Kidney (tissue), 22 donors: ENCODE measurements at regions of chr20 and their contacts with region 1.

Region 1: DNA sequence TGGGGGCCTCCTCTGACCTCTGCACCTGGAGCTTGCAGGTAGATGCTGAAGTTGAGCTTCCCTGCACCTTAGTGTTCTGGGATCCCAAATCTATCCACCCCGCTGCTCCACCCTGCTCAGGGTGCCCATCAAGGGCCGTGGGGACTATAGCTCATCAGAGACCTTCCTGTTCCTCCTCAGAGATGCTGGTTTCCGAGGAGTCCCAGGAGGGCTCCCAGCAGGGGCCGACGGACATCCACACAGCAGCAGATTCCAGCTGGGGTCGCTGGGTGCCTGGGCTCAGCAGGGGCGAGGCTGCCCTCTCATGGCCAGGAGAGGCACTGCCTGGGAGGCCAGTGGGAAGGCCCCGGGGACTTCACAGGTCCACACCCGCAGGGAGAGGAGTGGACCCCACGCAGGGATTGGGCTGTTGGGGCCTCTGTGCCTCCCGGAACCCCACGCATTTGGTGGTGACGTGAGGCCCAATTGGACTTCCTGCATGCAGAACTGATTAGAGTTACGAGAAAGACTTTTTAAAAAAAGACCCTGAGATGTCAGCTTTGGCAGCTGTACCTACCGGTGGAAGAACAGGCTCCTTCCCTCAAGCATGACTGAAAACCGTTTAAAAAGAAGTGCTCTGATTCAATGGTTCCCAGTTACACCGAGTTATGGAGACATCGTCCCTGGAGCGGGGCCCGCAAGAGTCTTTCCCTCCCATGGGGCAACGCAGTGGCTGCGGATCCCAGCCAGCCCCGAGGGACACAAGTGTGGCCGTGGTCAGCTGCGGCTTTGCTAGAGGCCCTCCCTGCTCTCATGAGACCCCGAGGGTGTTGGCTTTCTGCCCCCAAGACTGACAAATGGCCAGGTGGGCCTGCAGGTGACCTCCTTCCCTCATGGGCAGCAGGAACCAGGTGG is 25.3 kb upstream of the SLCO4A1 start:
- DNase-seq: peak; percentile 80 to 93 (median 84)
- H3K4me3 ChIP-seq: no peak overlapping the region
- H3K27ac ChIP-seq: peak overlapping the region in 1 of 2 donors; percentile 77
- H3K4me1 ChIP-seq: peaks cover 0 to 3% (median 0%) of the 10 kb centered on the region in 3 donors
- H3K27me3 ChIP-seq: no peaks in the 10 kb centered on the region
- CTCF ChIP-seq: peak; percentile 95

Region 2: DNA sequence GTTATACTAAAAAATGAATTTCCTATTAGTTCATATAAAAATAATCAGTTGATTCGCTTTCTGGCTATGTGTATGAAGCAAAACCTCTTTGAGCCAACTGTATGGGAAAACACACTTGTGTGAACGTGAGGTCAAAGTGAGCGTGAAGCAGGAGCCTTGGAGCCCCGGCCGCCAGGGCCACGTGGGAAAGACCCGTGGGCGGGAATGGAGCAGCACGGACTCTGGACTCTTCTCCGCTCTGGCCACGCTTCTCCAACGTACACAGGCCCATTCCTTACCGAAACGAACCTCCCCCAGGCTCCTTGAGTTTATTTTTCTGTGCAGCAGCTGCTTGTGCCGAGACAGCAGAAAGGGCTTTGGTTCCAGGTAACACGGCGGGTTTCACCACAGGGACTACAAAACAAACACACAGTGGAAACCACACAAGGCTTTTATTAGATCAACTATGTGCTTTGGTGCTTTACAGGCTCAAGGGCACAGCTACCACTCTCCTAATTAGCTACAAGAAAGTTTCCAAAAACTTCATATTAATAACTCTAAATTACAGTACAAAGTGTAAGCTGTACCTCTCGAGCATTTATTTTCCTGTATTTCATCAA is 614.0 kb before region 1 on chr20:
- intact Hi-C with region 1: no loop called
- DNase-seq: peak in 3 of 5 donors; percentile 19 to 58 (median 40)
- H3K4me3 ChIP-seq: no peak overlapping the region
- H3K27ac ChIP-seq: peak overlapping the region in 1 of 2 donors; percentile 26
- H3K4me1 ChIP-seq: peaks cover 0 to 5% (median 0%) of the 10 kb centered on the region in 3 donors
- H3K27me3 ChIP-seq: no peaks in the 10 kb centered on the region
- CTCF ChIP-seq: no peak

Region 3: DNA sequence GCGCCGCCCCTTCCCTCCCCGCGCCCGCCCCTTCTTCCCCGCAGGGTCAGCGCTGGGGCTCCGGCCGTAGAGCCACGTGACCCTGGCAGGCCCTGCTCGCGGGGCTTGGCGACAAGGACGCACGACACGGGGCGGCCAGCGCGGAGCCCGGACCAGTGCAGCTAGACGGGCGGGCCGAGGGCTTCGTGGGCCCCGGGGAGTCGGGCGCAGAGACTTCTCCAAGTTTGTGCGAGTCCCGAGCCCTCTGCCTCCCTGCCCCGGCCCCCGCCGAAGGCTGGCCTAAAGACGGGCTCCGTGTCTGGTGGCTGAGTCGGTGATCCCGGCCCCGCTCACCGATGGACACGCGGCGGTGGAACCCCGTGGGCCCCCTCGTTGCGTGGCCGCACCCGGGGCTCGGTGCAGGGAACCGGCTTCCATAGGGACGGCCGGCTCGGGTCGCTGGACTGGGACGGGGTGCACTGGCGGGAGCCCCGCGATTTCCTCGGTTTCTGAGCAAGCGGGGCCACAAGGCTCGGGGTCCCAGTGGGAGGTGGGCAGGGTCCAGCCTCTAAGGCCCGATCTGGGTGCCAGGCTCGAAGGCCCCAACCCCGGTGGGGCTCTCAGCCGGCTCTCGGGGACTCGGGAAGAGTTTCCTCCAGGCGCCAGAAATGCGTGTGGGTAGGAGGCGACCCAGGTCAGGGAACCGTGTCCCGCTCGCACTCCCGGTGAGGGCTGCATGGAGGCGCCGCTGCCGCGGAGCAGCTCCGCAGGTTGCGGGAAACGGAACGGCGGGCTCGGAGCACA is 140.7 kb before region 1 on chr20:
- intact Hi-C with region 1: no loop called
- DNase-seq: peak in 4 of 5 donors; percentile 53 to 89 (median 71)
- H3K4me3 ChIP-seq: peak overlapping the region in 1 of 3 donors; percentile 17
- H3K27ac ChIP-seq: no peak overlapping the region
- H3K4me1 ChIP-seq: peaks cover 0 to 3% (median 0%) of the 10 kb centered on the region in 3 donors
- H3K27me3 ChIP-seq: peaks cover 9% of the 10 kb centered on the region
- CTCF ChIP-seq: no peak

Region 4: DNA sequence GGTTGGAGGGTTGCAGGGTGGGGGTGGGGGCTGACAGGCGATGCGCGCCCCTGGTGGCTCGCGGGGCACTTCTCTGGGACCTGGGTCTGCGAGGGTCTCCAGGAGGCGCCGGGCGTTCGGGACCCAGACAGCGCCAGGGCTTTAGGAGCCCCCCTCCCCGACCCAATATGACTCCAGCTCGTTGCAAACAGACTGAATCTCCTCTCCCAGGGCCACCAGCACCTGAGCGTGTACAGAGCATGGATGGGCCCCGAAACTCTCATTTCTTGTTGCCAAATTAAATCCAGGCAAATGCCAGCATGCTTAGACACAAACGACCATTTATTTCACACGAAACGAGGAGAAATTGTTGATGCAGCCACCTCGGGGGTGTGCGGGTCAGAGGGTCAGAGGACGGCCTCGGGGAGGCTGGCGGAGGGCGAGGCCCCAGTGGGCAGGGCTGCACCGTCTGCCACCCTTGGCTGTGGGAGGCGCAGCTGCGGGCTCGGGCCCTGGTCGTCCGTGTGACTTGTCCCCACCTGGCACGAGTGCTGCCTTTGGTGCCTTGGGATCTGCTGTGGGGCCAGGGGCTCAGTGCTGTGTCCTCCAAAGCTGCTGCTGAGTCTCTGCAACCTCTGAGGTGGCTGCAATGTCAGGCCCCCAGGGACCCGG is 120.3 kb before region 1 on chr20:
- intact Hi-C with region 1: loop called (anchors 5 kb)
- DNase-seq: peak in 2 of 5 donors; percentile 64
- H3K4me3 ChIP-seq: no peak overlapping the region
- H3K27ac ChIP-seq: no peak overlapping the region
- H3K4me1 ChIP-seq: peaks cover 0 to 15% (median 0%) of the 10 kb centered on the region in 3 donors
- H3K27me3 ChIP-seq: no peaks in the 10 kb centered on the region
- CTCF ChIP-seq: peak; percentile 51